ENCODE measurements at regions of chr1 and their contacts with region 1.

Region 1: DNA sequence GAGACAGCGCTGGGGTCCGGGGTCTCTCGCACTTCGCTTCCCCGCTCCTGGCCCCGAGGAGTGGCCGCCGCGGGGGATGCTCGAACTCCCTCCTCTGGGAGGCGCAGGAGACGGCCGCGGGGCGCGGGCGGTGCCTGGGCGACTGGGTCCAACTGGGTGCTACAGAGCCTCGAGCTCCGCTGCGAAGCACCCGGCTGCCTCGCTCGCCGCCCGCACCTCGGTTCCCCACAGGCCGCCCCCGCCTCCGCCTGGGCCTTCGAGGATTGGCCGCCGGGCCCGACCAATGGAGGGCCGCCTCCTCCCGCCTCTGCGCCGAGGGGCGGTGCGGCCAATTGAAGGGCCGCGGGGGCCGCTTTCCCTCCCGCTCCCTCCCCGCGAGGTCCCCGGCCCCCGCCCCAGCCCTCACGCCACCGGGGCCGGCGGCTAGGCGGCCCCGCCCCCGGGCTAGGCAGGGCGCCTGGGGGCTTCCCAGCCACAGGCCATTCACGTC is at the start of gene CNN3:
- DNase-seq: peak; percentile 98
- H3K4me3 ChIP-seq: peak within 1 kb of the TSS; percentile 96 to 98
- H3K27ac ChIP-seq: peak within 1 kb of the TSS; percentile 97 to 98
- H3K4me1 ChIP-seq: peaks cover 29 to 42% of the 10 kb centered on the region in 2 experiments
- H3K27me3 ChIP-seq: no peaks in the 10 kb centered on the region
- CTCF ChIP-seq: no peak
- EP300 ChIP-seq: no peak
- RAD21 ChIP-seq: no peak; the same call in 1 of the 2 replicates
- polyA plus RNA-seq, gene CNN3: 204 and 242 TPM in 2 replicates

Region 2: GRCh38 chr1:94936861-94937620 is 10.1 kb after region 1 on chr1:
- CTCF ChIA-PET with region 1: interaction called, 10 read pairs
- POLR2A ChIA-PET with region 1: no interaction called
- DNase-seq: no peak
- H3K4me3 ChIP-seq: no peak overlapping the region
- H3K27ac ChIP-seq: peak overlapping the region in 1 of 2 experiments; percentile 23; a peak in 1 of 4 replicates
- H3K4me1 ChIP-seq: peaks cover 0 to 38% of the 10 kb centered on the region in 2 experiments
- H3K27me3 ChIP-seq: no peaks in the 10 kb centered on the region
- CTCF ChIP-seq: no peak
- EP300 ChIP-seq: no peak
- RAD21 ChIP-seq: no peak

Measured in SK-N-SH (cell line).